Naive thymus-derived CD4-positive, alpha-beta T cell (primary cell): ENCODE measurements at regions of chr7 and their contacts with region 1.

Region 1: GRCh38 chr7:12686894-12687717 is at the start of gene ARL4A:
- DNase-seq: peak; percentile 70 to 87 (median 85)
- ATAC-seq: peak; percentile 60
- H3K4me3 ChIP-seq: peak within 1 kb of the TSS; percentile 76
- H3K4me3 Mint-ChIP-seq: peak within 1 kb of the TSS; percentile 94 to 100 (median 96)
- H3K27ac ChIP-seq: peak within 1 kb of the TSS; percentile 95
- H3K27ac Mint-ChIP-seq: peak within 1 kb of the TSS; percentile 83 to 98 (median 96)
- H3K4me1 ChIP-seq: peaks cover 5 to 14% of the 10 kb centered on the region in 2 donors
- H3K4me1 Mint-ChIP-seq: peaks cover 7 to 35% (median 25%) of the 10 kb centered on the region in 7 donors
- H3K27me3 ChIP-seq: no peaks in the 10 kb centered on the region
- H3K27me3 Mint-ChIP-seq: no peaks in the 10 kb centered on the region
- total RNA-seq, gene ARL4A: 5.5 to 97.4 (median 11.6) TPM

Region 2: DNA sequence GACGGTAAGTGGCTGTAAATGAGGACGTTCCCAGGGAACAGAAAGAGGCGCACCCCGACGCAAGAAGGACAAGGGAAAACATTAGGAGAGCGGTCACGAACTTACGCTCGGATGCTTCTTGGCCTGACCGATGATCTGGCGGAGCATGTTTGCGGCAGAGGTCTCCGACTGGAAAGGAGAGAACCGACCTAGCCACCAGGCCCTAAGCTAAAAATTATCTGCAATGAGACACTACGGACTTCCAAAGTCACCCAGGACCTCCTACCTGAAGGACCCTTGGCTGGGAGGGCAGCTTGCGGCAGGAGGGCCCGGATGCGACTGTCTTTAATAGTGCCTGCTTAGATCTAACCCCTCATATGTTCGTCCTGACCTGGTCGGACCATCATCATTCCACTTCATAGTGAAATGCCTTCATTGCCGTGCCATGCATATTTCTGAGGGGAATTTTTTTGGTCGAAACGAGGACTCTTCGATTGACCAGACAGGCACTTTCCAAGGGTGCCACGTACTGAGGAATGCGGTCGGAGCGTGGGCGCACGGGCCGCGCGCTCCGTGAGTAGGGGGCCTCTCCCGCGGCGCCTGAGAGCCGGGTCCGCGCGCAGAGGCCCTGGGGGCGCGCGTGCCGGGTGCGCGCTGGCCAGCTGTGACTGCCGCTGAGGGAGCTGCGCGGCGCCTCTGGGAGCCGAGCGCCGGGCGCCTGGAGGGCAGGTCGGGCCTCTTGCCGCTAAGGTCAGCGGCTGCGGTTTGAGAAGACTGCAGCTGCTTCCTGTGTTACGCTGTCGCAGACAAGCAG is 1747.0 kb before region 1 on chr7:
- CTCF ChIA-PET with region 1: no interaction called
- POLR2A ChIA-PET with region 1: no interaction called
- intact Hi-C with region 1: loop called (anchors 1 to 10 kb)
- DNase-seq: peak; percentile 86 to 95 (median 90)
- ATAC-seq: peak; percentile 94
- H3K4me3 ChIP-seq: peak overlapping the region; percentile 83
- H3K4me3 Mint-ChIP-seq: no peak overlapping the region
- H3K27ac ChIP-seq: peak overlapping the region; percentile 91
- H3K27ac Mint-ChIP-seq: no peak overlapping the region
- H3K4me1 ChIP-seq: peaks cover 0 to 7% of the 10 kb centered on the region in 2 donors
- H3K4me1 Mint-ChIP-seq: peaks cover 8 to 50% (median 32%) of the 10 kb centered on the region in 7 donors
- H3K27me3 ChIP-seq: no peaks in the 10 kb centered on the region
- H3K27me3 Mint-ChIP-seq: no peaks in the 10 kb centered on the region

Region 3: DNA sequence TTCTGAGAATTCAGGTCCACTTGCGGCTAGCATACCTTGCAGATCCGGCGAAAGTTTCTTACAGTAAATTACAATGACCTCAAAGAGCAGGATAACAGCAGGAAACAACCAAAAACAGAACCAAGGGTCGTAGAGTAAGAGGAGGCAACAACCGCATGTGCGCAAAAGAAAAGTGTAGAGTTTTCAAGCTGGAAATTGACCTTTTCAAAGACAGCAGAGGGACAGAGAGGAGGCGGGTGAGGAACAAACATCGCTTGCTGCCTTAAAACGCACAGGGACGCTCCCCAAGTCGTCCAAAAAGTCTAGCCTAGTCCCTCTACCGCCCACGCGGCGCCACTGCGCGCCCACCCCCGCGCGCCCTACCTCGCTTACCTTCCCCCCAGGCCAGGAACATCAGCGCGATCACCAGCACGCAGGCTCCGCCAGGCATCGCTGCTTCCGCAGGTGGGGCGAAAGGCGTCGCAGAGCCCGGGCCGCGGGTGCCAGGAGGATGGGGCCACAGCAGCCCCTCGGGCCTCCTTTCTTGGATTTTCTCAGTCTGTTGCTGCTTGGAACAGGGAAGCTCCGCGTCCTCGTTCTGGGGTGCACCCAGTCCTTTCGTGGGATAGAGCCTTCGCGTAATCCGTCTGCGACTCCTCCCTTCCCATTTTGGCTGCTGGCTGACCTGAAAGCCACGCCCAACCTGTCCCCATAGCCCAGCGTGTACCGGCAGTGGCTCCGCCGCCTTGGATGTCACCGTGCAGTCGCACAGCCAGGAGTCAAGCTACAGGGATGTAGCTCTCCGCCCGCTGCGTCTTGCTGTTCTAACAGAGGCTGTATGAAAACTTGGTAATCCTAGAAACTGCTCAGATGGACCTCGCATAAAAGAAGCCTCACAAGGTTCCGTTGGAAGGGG is 283.6 kb before region 1 on chr7 and contains the start of gene VWDE:
- CTCF ChIA-PET with region 1: no interaction called
- POLR2A ChIA-PET with region 1: no interaction called
- intact Hi-C with region 1: loop called in 1 of 2 experiments (anchors 1 kb)
- DNase-seq: peak; percentile 3 to 74 (median 29)
- ATAC-seq: peak; percentile 89
- H3K4me3 ChIP-seq: peak within 1 kb of the TSS; percentile 62
- H3K4me3 Mint-ChIP-seq: peak within 1 kb of the TSS; percentile 80 to 96 (median 88)
- H3K27ac ChIP-seq: peak within 1 kb of the TSS; percentile 38
- H3K27ac Mint-ChIP-seq: peak within 1 kb of the TSS in 6 of 9 donors; percentile 14 to 89 (median 82)
- H3K4me1 ChIP-seq: no peaks in the 10 kb centered on the region
- H3K4me1 Mint-ChIP-seq: peaks cover 11 to 20% (median 16%) of the 10 kb centered on the region in 7 donors
- H3K27me3 ChIP-seq: no peaks in the 10 kb centered on the region
- H3K27me3 Mint-ChIP-seq: peaks cover 14 to 44% (median 25%) of the 10 kb centered on the region in 5 donors
- total RNA-seq, gene VWDE: 1.3 to 4.9 (median 3.9) TPM

Region 4: GRCh38 chr7:12450615-12451014 is 236.5 kb before region 1 on chr7:
- CTCF ChIA-PET with region 1: no interaction called
- POLR2A ChIA-PET with region 1: no interaction called
- intact Hi-C with region 1: no loop called
- DNase-seq: no peak
- ATAC-seq: no peak
- H3K4me3 ChIP-seq: no peak overlapping the region
- H3K4me3 Mint-ChIP-seq: no peak overlapping the region
- H3K27ac ChIP-seq: no peak overlapping the region
- H3K27ac Mint-ChIP-seq: no peak overlapping the region
- H3K4me1 ChIP-seq: no peaks in the 10 kb centered on the region
- H3K4me1 Mint-ChIP-seq: no peaks in the 10 kb centered on the region
- H3K27me3 ChIP-seq: no peaks in the 10 kb centered on the region
- H3K27me3 Mint-ChIP-seq: peaks cover 4 to 20% (median 5%) of the 10 kb centered on the region in 5 donors

Region 5: DNA sequence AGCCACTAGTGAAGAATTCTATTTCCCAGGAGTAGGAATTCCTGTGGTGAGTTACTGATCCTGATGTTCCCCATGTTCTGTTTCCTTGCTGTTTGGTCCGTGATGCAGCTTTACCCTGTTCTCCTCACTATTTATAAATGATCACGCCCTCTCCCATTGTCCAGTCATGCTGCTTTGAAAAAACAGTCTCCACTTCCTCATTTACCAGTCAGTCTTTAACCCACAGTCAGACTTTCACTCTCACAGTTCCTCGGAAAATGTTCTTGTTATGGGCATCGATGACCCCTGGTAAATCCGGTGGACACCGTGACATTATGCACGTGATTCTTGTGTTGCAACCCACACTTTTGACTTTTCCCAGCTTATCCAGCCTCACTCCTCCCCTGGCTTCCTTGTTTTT is 102.2 kb before region 1 on chr7:
- CTCF ChIA-PET with region 1: no interaction called
- POLR2A ChIA-PET with region 1: no interaction called
- intact Hi-C with region 1: no loop called
- DNase-seq: no peak
- ATAC-seq: peak; percentile 74
- H3K4me3 ChIP-seq: no peak overlapping the region
- H3K4me3 Mint-ChIP-seq: no peak overlapping the region
- H3K27ac ChIP-seq: no peak overlapping the region
- H3K27ac Mint-ChIP-seq: no peak overlapping the region
- H3K4me1 ChIP-seq: no peaks in the 10 kb centered on the region
- H3K4me1 Mint-ChIP-seq: peaks cover 0 to 5% (median 0%) of the 10 kb centered on the region in 7 donors
- H3K27me3 ChIP-seq: no peaks in the 10 kb centered on the region
- H3K27me3 Mint-ChIP-seq: peaks cover 14 to 35% (median 26%) of the 10 kb centered on the region in 5 donors

Region 6: DNA sequence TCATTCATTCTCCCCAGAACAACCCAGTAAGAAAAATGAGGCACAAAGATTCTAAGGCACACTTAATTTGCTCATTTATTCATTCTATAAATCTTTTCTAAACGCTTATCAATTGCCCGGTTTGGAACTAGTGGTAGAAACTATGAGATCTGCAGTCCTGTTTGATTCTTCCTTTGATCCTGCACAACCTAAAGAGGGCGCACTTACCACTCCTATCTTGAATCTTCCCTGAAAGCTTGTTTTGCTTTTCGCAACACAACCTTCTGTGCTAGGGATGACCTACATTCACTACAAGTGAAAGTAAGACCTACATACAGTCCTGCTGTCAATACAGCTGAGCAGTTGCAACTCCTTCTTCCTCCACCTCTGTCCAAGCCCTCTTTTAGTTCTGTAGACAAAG is 12.3 kb before region 1 on chr7:
- CTCF ChIA-PET with region 1: interaction called, 3 read pairs
- POLR2A ChIA-PET with region 1: no interaction called
- intact Hi-C with region 1: loop called (anchors 1 kb)
- DNase-seq: peak in 7 of 9 donors; percentile 31 to 64 (median 50)
- ATAC-seq: peak; percentile 92
- H3K4me3 ChIP-seq: no peak overlapping the region
- H3K4me3 Mint-ChIP-seq: no peak overlapping the region
- H3K27ac ChIP-seq: no peak overlapping the region
- H3K27ac Mint-ChIP-seq: peak overlapping the region in 2 of 9 donors; percentile 0
- H3K4me1 ChIP-seq: peaks cover 0 to 4% of the 10 kb centered on the region in 2 donors
- H3K4me1 Mint-ChIP-seq: peaks cover 7 to 13% (median 9%) of the 10 kb centered on the region in 7 donors
- H3K27me3 ChIP-seq: no peaks in the 10 kb centered on the region
- H3K27me3 Mint-ChIP-seq: peaks cover 0 to 13% (median 0%) of the 10 kb centered on the region in 5 donors

Region 7: GRCh38 chr7:12731214-12731656 is 44.1 kb after region 1 on chr7:
- CTCF ChIA-PET with region 1: interaction called, 4 read pairs
- POLR2A ChIA-PET with region 1: interaction called, 3 read pairs
- intact Hi-C with region 1: loop called (anchors 1 kb)
- DNase-seq: peak in 2 of 9 donors; percentile 6 to 19
- ATAC-seq: peak; percentile 40
- H3K4me3 ChIP-seq: no peak overlapping the region
- H3K4me3 Mint-ChIP-seq: peak overlapping the region in 9 of 10 donors; percentile 40 to 86 (median 72)
- H3K27ac ChIP-seq: peak overlapping the region; percentile 6
- H3K27ac Mint-ChIP-seq: peak overlapping the region; percentile 26 to 95 (median 78)
- H3K4me1 ChIP-seq: peaks cover 13 to 17% of the 10 kb centered on the region in 2 donors
- H3K4me1 Mint-ChIP-seq: peaks cover 10 to 33% (median 26%) of the 10 kb centered on the region in 7 donors
- H3K27me3 ChIP-seq: no peaks in the 10 kb centered on the region
- H3K27me3 Mint-ChIP-seq: peaks cover 0 to 4% (median 0%) of the 10 kb centered on the region in 5 donors

Region 8: GRCh38 chr7:13179102-13179501 is 492.0 kb after region 1 on chr7:
- CTCF ChIA-PET with region 1: no interaction called
- POLR2A ChIA-PET with region 1: no interaction called
- intact Hi-C with region 1: loop called (anchors 5 kb)
- DNase-seq: no peak
- ATAC-seq: no peak
- H3K4me3 ChIP-seq: no peak overlapping the region
- H3K4me3 Mint-ChIP-seq: no peak overlapping the region
- H3K27ac ChIP-seq: no peak overlapping the region
- H3K27ac Mint-ChIP-seq: no peak overlapping the region
- H3K4me1 ChIP-seq: no peaks in the 10 kb centered on the region
- H3K4me1 Mint-ChIP-seq: no peaks in the 10 kb centered on the region
- H3K27me3 ChIP-seq: no peaks in the 10 kb centered on the region
- H3K27me3 Mint-ChIP-seq: peaks cover 0 to 24% (median 12%) of the 10 kb centered on the region in 5 donors

Region 9: GRCh38 chr7:14457568-14458453 is 1770.7 kb after region 1 on chr7:
- CTCF ChIA-PET with region 1: interaction called, 3 read pairs
- POLR2A ChIA-PET with region 1: no interaction called
- intact Hi-C with region 1: loop called in 1 of 2 experiments (anchors 2 kb)
- DNase-seq: peak in 4 of 9 donors; percentile 10 to 22 (median 18)
- ATAC-seq: peak; percentile 49
- H3K4me3 ChIP-seq: no peak overlapping the region
- H3K4me3 Mint-ChIP-seq: no peak overlapping the region
- H3K27ac ChIP-seq: no peak overlapping the region
- H3K27ac Mint-ChIP-seq: no peak overlapping the region
- H3K4me1 ChIP-seq: no peaks in the 10 kb centered on the region
- H3K4me1 Mint-ChIP-seq: peaks cover 0 to 4% (median 0%) of the 10 kb centered on the region in 7 donors
- H3K27me3 ChIP-seq: no peaks in the 10 kb centered on the region
- H3K27me3 Mint-ChIP-seq: peaks cover 0 to 4% (median 0%) of the 10 kb centered on the region in 5 donors